SK-N-SH (cell line): ENCODE measurements at regions of chr5 and their contacts with region 1.

Region 1: DNA sequence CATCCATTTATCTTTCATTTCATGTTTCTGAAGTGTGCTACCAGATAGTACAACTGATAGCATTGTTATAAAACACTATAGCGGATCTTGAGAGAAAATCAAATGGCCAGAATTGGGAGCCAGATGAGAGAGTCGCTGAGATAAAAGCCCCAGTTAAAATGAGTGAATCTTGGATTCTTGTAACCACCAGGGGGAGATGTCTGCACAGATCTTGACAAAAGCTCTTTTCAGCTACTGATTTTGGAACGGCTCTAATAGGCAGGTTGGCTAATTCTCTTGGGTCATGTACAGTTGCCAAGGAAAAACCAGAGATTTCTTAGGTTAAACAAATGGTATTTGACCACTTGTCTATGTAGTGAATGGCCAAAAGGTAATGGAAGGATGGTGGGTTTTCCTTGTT is 21.7 kb downstream of the F2RL2 start:
- DNase-seq: peak; percentile 49
- H3K4me3 ChIP-seq: no peak overlapping the region
- H3K27ac ChIP-seq: no peak overlapping the region
- H3K4me1 ChIP-seq: peaks cover 0 to 8% of the 10 kb centered on the region in 2 experiments; a peak in 3 of 4 replicates
- H3K27me3 ChIP-seq: no peaks in the 10 kb centered on the region
- CTCF ChIP-seq: peak; percentile 82
- EP300 ChIP-seq: no peak
- RAD21 ChIP-seq: peak; percentile 87

Region 2: GRCh38 chr5:76582230-76583162 is 19.0 kb before region 1 on chr5:
- CTCF ChIA-PET with region 1: interaction called, 31 read pairs
- POLR2A ChIA-PET with region 1: no interaction called
- DNase-seq: no peak
- H3K4me3 ChIP-seq: no peak overlapping the region
- H3K27ac ChIP-seq: no peak overlapping the region
- H3K4me1 ChIP-seq: no peaks in the 10 kb centered on the region; a peak in 1 of 4 replicates
- H3K27me3 ChIP-seq: no peaks in the 10 kb centered on the region
- CTCF ChIP-seq: no peak
- EP300 ChIP-seq: no peak
- RAD21 ChIP-seq: no peak

Region 3: GRCh38 chr5:76634661-76635060 is 33.2 kb after region 1 on chr5:
- CTCF ChIA-PET with region 1: interaction called, 23 read pairs
- POLR2A ChIA-PET with region 1: no interaction called
- DNase-seq: no peak
- H3K4me3 ChIP-seq: no peak overlapping the region
- H3K27ac ChIP-seq: no peak overlapping the region
- H3K4me1 ChIP-seq: peaks cover 0 to 5% of the 10 kb centered on the region in 2 experiments; a peak in 1 of 4 replicates
- H3K27me3 ChIP-seq: no peaks in the 10 kb centered on the region
- CTCF ChIP-seq: no peak
- EP300 ChIP-seq: no peak
- RAD21 ChIP-seq: no peak

Region 4: GRCh38 chr5:76641514-76642120 is 40.1 kb after region 1 on chr5:
- CTCF ChIA-PET with region 1: interaction called, 23 read pairs
- POLR2A ChIA-PET with region 1: no interaction called
- DNase-seq: peak; percentile 39
- H3K4me3 ChIP-seq: peak overlapping the region in 1 of 2 experiments; percentile 33; a peak in 1 of 4 replicates
- H3K27ac ChIP-seq: no peak overlapping the region
- H3K4me1 ChIP-seq: peaks cover 0 to 16% of the 10 kb centered on the region in 2 experiments; a peak in 3 of 4 replicates
- H3K27me3 ChIP-seq: no peaks in the 10 kb centered on the region
- CTCF ChIP-seq: peak; percentile 93
- EP300 ChIP-seq: no peak
- RAD21 ChIP-seq: peak; percentile 88

Region 5: GRCh38 chr5:76855961-76856360 is 254.5 kb after region 1 on chr5:
- CTCF ChIA-PET with region 1: no interaction called
- POLR2A ChIA-PET with region 1: no interaction called
- DNase-seq: no peak
- H3K4me3 ChIP-seq: no peak overlapping the region
- H3K27ac ChIP-seq: no peak overlapping the region
- H3K4me1 ChIP-seq: no peaks in the 10 kb centered on the region
- H3K27me3 ChIP-seq: no peaks in the 10 kb centered on the region
- CTCF ChIP-seq: no peak
- EP300 ChIP-seq: no peak
- RAD21 ChIP-seq: no peak